B cell (primary cell): ENCODE measurements at regions of chr11 and their contacts with region 1.

Region 1: GRCh38 chr11:83071567-83072349 is at the start of gene RAB30:
- DNase-seq: peak; percentile 97
- ATAC-seq: peak; percentile 92
- H3K4me3 ChIP-seq: peak within 1 kb of the TSS; percentile 74 to 100 (median 94)
- H3K4me3 Mint-ChIP-seq: no peak within 1 kb of the TSS
- H3K27ac ChIP-seq: peak within 1 kb of the TSS; percentile 94
- H3K27ac Mint-ChIP-seq: no peak within 1 kb of the TSS
- H3K4me1 ChIP-seq: peaks cover 51 to 53% of the 10 kb centered on the region in 2 donors
- H3K4me1 Mint-ChIP-seq: peaks cover 54% of the 10 kb centered on the region
- H3K27me3 ChIP-seq: no peaks in the 10 kb centered on the region
- H3K27me3 Mint-ChIP-seq: no peaks in the 10 kb centered on the region
- CTCF ChIP-seq: no peak
- total RNA-seq, gene RAB30: 208 and 214 TPM in 2 replicates

Region 2: GRCh38 chr11:82900277-82901164 is 171.2 kb before region 1 on chr11 and contains the start of gene PRCP:
- CTCF ChIA-PET with region 1: interaction called, 3 read pairs
- POLR2A ChIA-PET with region 1: interaction called, 4 read pairs
- intact Hi-C with region 1: loop called (anchors 1 kb)
- DNase-seq: peak; percentile 94
- ATAC-seq: peak; percentile 73
- H3K4me3 ChIP-seq: peak within 1 kb of the TSS; percentile 54 to 97 (median 93)
- H3K4me3 Mint-ChIP-seq: peak within 1 kb of the TSS; percentile 100
- H3K27ac ChIP-seq: peak within 1 kb of the TSS; percentile 94 to 95
- H3K27ac Mint-ChIP-seq: peak within 1 kb of the TSS; percentile 99
- H3K4me1 ChIP-seq: peaks cover 46 to 50% of the 10 kb centered on the region in 2 donors
- H3K4me1 Mint-ChIP-seq: peaks cover 52% of the 10 kb centered on the region
- H3K27me3 ChIP-seq: no peaks in the 10 kb centered on the region
- H3K27me3 Mint-ChIP-seq: no peaks in the 10 kb centered on the region
- CTCF ChIP-seq: no peak
- total RNA-seq, gene PRCP: 37.7 and 45.2 TPM in 2 replicates

Region 3: DNA sequence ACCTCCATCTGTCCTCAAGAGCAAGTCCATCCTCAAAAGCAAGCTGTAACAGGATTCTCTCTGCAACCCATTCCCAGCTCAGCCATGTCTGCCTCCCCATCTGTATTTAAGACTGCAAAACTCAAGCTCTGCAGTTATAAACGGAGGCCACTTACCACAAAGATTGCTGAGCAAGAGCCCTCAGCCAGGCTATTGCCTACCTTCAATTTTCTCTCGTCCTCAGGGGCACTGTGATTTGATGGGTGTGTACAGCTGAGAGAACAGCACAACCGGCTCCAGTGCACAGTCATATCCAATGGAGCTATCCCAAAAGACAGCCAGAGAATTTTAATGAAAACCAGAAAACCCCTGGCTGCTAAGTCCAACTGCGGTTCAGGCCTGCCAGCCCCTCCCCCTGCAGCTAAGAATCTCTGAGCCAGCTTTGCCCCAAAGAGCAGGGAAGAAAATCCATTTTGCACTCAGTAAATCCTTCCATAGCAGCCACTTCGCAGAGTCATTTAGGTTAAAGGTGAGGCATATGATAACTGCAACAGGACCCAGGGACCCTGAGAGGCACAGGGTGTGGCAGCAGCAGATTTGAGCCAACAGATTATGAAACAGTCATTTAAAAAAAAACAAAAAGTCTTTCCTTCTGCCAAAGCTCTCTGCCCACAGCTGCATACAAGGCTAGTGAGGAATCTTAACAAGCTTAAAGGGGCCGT is 37.6 kb before region 1 on chr11:
- CTCF ChIA-PET with region 1: interaction called, 3 read pairs
- POLR2A ChIA-PET with region 1: interaction called, 3 read pairs
- intact Hi-C with region 1: loop called (anchors 1 kb)
- DNase-seq: no peak
- ATAC-seq: no peak
- H3K4me3 ChIP-seq: peak overlapping the region in 1 of 5 experiments; percentile 14
- H3K4me3 Mint-ChIP-seq: peak overlapping the region; percentile 88
- H3K27ac ChIP-seq: peak overlapping the region in 1 of 2 donors; percentile 96
- H3K27ac Mint-ChIP-seq: peak overlapping the region; percentile 88
- H3K4me1 ChIP-seq: peaks cover 56% of the 10 kb centered on the region in 2 donors
- H3K4me1 Mint-ChIP-seq: peaks cover 71% of the 10 kb centered on the region
- H3K27me3 ChIP-seq: no peaks in the 10 kb centered on the region
- H3K27me3 Mint-ChIP-seq: no peaks in the 10 kb centered on the region
- CTCF ChIP-seq: no peak

Region 4: GRCh38 chr11:83051760-83052671 is 19.7 kb before region 1 on chr11:
- CTCF ChIA-PET with region 1: interaction called, 3 read pairs
- POLR2A ChIA-PET with region 1: interaction called, 11 read pairs
- intact Hi-C with region 1: loop called (anchors 2 kb)
- DNase-seq: no peak
- ATAC-seq: no peak
- H3K4me3 ChIP-seq: no peak overlapping the region
- H3K4me3 Mint-ChIP-seq: no peak overlapping the region
- H3K27ac ChIP-seq: peak overlapping the region; percentile 74 to 94
- H3K27ac Mint-ChIP-seq: peak overlapping the region; percentile 82
- H3K4me1 ChIP-seq: peaks cover 72 to 83% of the 10 kb centered on the region in 2 donors
- H3K4me1 Mint-ChIP-seq: peaks cover 80% of the 10 kb centered on the region
- H3K27me3 ChIP-seq: no peaks in the 10 kb centered on the region
- H3K27me3 Mint-ChIP-seq: no peaks in the 10 kb centered on the region
- CTCF ChIP-seq: no peak

Region 5: DNA sequence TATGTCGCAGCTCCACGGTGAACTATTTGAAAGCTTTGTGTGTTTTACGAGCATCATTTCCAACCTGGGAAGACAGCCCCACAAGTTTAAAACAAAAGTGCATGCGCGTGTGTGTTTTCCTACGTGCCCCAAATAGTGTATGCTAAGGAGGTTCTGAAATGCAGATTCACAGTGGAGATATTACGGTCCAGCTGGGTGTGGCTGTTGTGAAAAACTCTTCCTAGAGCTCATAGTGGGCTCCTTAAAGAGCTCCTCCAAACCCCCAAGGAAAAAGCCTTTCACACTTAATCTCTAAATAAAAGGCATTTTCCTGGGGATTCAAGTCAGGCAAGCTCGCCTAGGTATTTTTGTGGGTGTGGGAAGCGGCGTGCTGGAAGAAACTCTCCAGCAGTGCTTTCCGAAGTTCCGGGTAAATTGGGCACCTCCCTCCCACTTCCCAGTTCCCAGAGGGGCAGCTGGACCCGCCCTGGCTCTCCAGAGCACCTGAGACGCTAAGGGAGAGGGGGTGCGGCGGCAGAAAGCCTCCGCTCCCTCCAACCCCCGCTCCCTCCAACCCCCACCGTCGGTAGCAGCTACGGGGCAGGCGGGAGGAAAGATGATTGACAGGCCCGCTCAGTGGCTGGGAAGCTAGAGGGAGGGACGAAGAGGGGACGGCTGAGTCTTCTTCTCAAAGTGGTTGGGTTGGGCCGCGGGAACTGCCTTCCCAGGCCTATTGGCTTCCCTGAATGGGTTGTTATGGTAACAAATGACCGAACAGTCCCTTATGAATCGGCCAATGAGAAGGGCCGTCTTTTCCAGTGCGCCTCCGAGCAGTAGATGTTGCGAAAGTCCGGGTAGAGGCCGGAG is 84.6 kb after region 1 on chr11:
- CTCF ChIA-PET with region 1: interaction called, 10 read pairs
- POLR2A ChIA-PET with region 1: interaction called, 15 read pairs
- intact Hi-C with region 1: loop called (anchors 1 kb)
- DNase-seq: peak; percentile 100
- ATAC-seq: peak; percentile 86
- H3K4me3 ChIP-seq: peak overlapping the region; percentile 67 to 95 (median 72)
- H3K4me3 Mint-ChIP-seq: peak overlapping the region; percentile 98
- H3K27ac ChIP-seq: peak overlapping the region; percentile 78 to 86
- H3K27ac Mint-ChIP-seq: peak overlapping the region; percentile 100
- H3K4me1 ChIP-seq: peaks cover 23 to 24% of the 10 kb centered on the region in 2 donors
- H3K4me1 Mint-ChIP-seq: peaks cover 38% of the 10 kb centered on the region
- H3K27me3 ChIP-seq: no peaks in the 10 kb centered on the region
- H3K27me3 Mint-ChIP-seq: no peaks in the 10 kb centered on the region
- CTCF ChIP-seq: no peak

Region 6: GRCh38 chr11:83285771-83286528 is 214.2 kb after region 1 on chr11 and contains the start of gene CCDC90B:
- CTCF ChIA-PET with region 1: no interaction called
- POLR2A ChIA-PET with region 1: no interaction called
- intact Hi-C with region 1: loop called (anchors 1 kb)
- DNase-seq: peak; percentile 97
- ATAC-seq: peak; percentile 86
- H3K4me3 ChIP-seq: peak within 1 kb of the TSS; percentile 77 to 97 (median 91)
- H3K4me3 Mint-ChIP-seq: peak within 1 kb of the TSS; percentile 97
- H3K27ac ChIP-seq: peak within 1 kb of the TSS; percentile 92 to 96
- H3K27ac Mint-ChIP-seq: peak within 1 kb of the TSS; percentile 99
- H3K4me1 ChIP-seq: peaks cover 40 to 47% of the 10 kb centered on the region in 2 donors
- H3K4me1 Mint-ChIP-seq: peaks cover 59% of the 10 kb centered on the region
- H3K27me3 ChIP-seq: no peaks in the 10 kb centered on the region
- H3K27me3 Mint-ChIP-seq: no peaks in the 10 kb centered on the region
- CTCF ChIP-seq: no peak
- total RNA-seq, gene CCDC90B: 35.2 and 39.1 TPM in 2 replicates